A673 (cell line): ENCODE measurements at regions of chr17 and their contacts with region 1.

Region 1: DNA sequence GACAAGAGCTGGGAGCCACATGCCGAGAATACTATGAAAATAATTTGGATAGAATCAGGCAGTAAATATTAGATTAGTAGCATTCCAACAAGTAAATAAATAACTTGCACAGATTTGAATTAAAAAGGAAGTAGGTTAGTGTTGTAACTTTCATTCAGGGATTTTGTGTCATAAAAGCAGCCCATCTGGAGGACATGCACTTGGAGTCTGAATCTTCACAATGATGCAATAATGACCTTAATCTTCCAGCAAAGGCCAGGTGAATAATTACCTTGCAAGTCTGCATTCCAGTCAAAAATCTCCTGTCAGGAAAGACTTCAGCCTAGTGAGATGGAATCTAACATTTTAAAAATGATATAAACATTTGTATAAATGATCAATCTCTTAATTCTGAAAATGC is 518.1 kb downstream of the KCNJ2 start:
- DNase-seq: no peak
- H3K4me3 ChIP-seq: no peak overlapping the region
- H3K27ac ChIP-seq: no peak overlapping the region
- H3K4me1 ChIP-seq: no peaks in the 10 kb centered on the region
- H3K27me3 ChIP-seq: no peaks in the 10 kb centered on the region
- CTCF ChIP-seq: no peak

Region 2: DNA sequence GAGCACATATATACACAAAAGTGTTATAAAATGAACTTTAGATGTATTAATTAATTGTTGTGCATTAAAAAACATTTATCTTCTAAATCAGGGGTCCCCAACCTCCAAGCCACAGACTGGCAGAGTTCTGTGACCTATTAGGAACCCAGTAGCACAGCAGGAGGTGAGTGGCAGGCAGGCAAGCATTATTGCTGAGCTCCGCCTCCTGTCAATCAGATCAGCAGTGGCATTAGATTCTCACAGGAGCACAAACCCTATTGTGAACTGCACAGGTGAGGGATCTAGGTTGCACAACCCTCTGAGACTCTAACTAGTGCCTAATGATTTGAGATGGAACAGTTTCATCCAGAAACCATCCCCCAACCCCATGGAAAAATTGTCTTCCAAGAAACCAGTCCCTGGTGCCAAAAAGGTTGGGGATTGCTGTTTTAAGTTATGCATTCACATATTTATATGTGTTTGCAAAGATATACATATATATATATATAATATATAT is 65.6 kb after region 1 on chr17:
- CTCF ChIA-PET with region 1: no interaction called
- POLR2A ChIA-PET with region 1: no interaction called
- intact Hi-C with region 1: loop called (anchors 10 kb)
- DNase-seq: no peak
- H3K4me3 ChIP-seq: no peak overlapping the region
- H3K27ac ChIP-seq: no peak overlapping the region
- H3K4me1 ChIP-seq: no peaks in the 10 kb centered on the region
- H3K27me3 ChIP-seq: no peaks in the 10 kb centered on the region
- CTCF ChIP-seq: no peak

Region 3: DNA sequence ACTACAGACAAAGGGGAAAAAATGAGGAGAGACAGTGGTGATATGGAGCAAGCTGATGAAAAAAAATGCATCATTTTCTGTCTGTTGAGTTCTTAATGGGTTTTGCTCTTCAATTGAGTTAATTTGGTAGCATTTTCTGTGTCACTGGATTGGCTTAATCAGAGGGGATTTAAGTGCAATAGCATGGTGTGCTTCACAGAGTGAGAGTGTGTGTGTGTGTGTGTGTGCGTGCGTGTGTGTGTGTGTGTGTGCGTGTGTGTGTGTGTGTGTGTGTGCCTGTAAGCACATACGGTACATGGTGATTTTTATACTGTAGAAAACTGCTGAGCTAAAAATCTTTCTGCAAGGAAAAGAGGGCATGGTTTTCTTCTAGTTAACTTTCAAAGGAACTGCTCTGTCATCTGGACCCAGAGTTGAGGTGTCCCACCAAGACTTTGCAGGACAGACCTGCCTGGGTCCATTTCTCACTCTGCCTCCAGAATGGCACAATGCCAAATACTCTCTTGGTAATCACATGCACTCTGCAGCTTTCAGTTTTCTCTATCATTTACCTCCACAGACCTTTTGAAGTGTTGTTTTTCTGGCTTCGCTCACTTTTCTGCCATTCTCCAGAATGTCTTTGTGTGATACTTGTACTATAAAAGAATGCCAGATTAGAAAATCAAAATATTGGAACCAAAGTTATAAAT is 480.8 kb after region 1 on chr17:
- CTCF ChIA-PET with region 1: no interaction called
- POLR2A ChIA-PET with region 1: no interaction called
- intact Hi-C with region 1: loop called (anchors 5 kb)
- DNase-seq: no peak
- H3K4me3 ChIP-seq: no peak overlapping the region
- H3K27ac ChIP-seq: no peak overlapping the region
- H3K4me1 ChIP-seq: no peaks in the 10 kb centered on the region
- H3K27me3 ChIP-seq: no peaks in the 10 kb centered on the region
- CTCF ChIP-seq: no peak